ENCODE measurements at regions of chr22 and their contacts with region 1.

Region 1: GRCh38 chr22:41543854-41544670 is at the start of gene POLR3H:
- DNase-seq: peak; percentile 98 to 99
- ATAC-seq: peak; percentile 98 to 100 (median 99)
- H3K4me3 ChIP-seq: peak within 1 kb of the TSS; percentile 63 to 94 (median 80)
- H3K27ac ChIP-seq: peak within 1 kb of the TSS; percentile 52 to 91 (median 84)
- H3K4me1 ChIP-seq: peaks cover 3 to 40% (median 24%) of the 10 kb centered on the region in 9 donors
- H3K27me3 ChIP-seq: no peaks in the 10 kb centered on the region
- CTCF ChIP-seq: peak; percentile 24 to 81 (median 63)
- total RNA-seq, gene POLR3H: 13.3 to 25.8 (median 16.9) TPM

Region 2: GRCh38 chr22:41589391-41590241 is 45.6 kb after region 1 on chr22 and contains the start of gene PMM1:
- intact Hi-C with region 1: loop called in 6 of 10 experiments (anchors 1 to 10 kb)
- DNase-seq: peak; percentile 100
- ATAC-seq: peak; percentile 98 to 100 (median 99)
- H3K4me3 ChIP-seq: peak within 1 kb of the TSS; percentile 68 to 97 (median 92)
- H3K27ac ChIP-seq: peak within 1 kb of the TSS in 9 of 10 donors; percentile 58 to 90 (median 78)
- H3K4me1 ChIP-seq: peaks cover 4 to 27% (median 19%) of the 10 kb centered on the region in 9 donors
- H3K27me3 ChIP-seq: no peaks in the 10 kb centered on the region
- CTCF ChIP-seq: no peak
- total RNA-seq, gene PMM1: 13.8 to 26.6 (median 21.9) TPM

Region 3: DNA sequence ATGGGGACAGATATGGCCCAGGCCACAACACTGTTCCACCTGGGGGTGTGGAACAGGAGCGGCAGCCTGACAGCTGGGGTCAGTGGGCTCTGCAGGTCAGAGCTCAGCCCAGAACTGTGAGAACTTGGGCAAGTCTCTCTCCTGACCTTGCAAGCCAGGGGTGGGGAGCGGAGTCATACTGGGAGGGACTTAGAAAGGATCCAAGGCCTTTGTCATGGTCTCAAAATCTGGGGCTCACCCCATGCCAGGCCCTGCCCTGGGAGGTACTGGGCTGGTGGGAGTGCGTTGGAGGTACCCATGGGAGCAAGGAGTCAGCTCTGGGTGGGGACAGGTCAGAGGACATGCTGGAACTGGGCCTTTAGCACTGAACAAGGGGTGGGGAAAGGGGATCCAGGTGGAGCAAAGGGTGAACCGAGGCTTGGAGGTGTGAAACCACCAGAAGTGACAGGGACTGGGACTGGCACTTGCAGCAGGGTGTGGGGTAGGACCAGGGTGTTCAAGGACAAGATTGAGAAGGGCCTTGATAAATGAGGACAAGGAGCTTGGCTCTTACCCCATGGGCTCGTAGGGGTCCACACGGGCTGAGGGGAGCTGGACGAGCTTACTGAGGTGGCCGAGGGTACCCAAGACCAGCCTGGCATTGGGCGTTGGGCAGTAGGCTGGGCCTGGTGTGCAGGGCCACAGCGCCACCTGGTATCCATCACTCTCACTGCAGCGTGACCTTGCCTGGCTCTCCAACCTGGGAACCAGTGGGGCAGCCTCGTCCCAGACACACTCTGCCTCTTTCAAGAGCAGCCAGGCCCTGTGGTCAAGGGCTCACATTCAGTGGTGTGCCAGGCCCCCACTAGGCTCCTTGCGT is 52.9 kb after region 1 on chr22:
- intact Hi-C with region 1: loop called in 5 of 10 experiments (anchors 2 to 10 kb)
- DNase-seq: peak; percentile 34 to 64
- ATAC-seq: peak; percentile 68 to 92 (median 87)
- H3K4me3 ChIP-seq: no peak overlapping the region
- H3K27ac ChIP-seq: peak overlapping the region in 9 of 10 donors; percentile 16 to 72 (median 61)
- H3K4me1 ChIP-seq: peaks cover 0 to 14% (median 10%) of the 10 kb centered on the region in 9 donors
- H3K27me3 ChIP-seq: no peaks in the 10 kb centered on the region
- CTCF ChIP-seq: peak; percentile 39 to 76 (median 71)

Region 4: GRCh38 chr22:41621099-41621910 is 77.2 kb after region 1 on chr22 and contains the start of gene XRCC6:
- intact Hi-C with region 1: loop called in 1 of 10 experiments (anchors 1 kb)
- DNase-seq: peak; percentile 100
- ATAC-seq: peak; percentile 97 to 99 (median 98)
- H3K4me3 ChIP-seq: peak within 1 kb of the TSS; percentile 75 to 99 (median 87)
- H3K27ac ChIP-seq: peak within 1 kb of the TSS; percentile 89 to 99 (median 96)
- H3K4me1 ChIP-seq: peaks cover 10 to 54% (median 39%) of the 10 kb centered on the region in 9 donors
- H3K27me3 ChIP-seq: no peaks in the 10 kb centered on the region
- CTCF ChIP-seq: no peak
- total RNA-seq, gene XRCC6: 152 to 192 (median 181) TPM

Measured in heart right ventricle (tissue), 16 donors.